Motor neuron (in vitro differentiated cells): ENCODE measurements at regions of chr12 and their contacts with region 1.

Region 1: DNA sequence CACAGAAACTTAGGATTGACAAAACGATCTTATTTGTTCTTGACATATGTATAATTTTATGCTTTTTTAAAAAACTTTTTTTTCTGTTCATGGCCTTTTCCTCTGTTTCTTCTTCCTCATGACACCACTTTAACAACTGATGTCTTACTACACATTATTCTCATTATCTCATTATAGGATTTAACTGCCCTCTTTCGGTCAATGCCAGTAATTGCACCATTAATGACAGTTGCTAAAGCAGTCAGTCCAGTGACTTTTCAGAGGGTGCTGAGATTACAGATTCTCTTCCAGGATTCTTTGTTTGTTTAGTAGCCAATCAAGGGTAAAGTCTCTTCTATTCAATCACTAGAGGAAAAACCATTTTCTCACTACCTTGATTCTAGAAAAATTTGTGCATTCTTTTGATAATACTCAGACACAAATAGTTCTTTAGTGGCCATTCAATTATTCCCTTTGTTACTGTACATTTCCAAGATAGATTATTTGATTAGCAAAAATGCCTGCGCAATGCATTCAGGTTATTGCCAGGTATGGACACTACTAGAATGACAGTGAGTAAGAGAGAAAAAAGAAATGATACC is 50.1 kb downstream of the KLRG1 start:
- ATAC-seq: peak in 6 of 8 experiments; percentile 44 to 84 (median 74)
- H3K4me3 ChIP-seq: no peak overlapping the region
- H3K27ac ChIP-seq: no peak overlapping the region
- H3K4me1 ChIP-seq: no peaks in the 10 kb centered on the region

Region 2: GRCh38 chr12:8544295-8544694 is 495.2 kb before region 1 on chr12:
- in situ Hi-C with region 1: loop called in 1 of 9 experiments (anchors 25 kb)
- ATAC-seq: peak; percentile 51 to 82 (median 70)
- H3K4me3 ChIP-seq: no peak overlapping the region
- H3K27ac ChIP-seq: no peak overlapping the region
- H3K4me1 ChIP-seq: no peaks in the 10 kb centered on the region

Region 3: DNA sequence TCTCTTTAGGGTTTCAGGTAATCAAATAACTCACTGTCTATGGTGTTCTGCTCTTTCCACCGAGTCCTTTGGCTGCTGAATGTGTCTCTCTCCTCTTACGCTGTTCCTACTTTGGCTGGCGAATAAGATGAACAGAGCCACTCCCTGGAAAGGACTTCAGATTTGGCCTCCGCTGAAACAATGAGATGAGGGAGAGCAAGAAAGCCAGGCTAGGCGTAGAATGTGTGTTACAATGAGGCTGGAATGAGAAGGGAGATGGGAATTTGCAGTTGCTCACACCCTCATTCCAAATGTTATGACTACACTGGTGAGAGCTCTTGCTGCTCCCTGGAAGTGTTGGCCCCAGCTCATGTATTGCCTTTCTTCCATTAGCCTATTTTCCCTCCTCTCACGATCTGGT is 376.9 kb before region 1 on chr12 and contains the start of gene MFAP5:
- in situ Hi-C with region 1: loop called in 3 of 9 experiments (anchors 10 to 25 kb)
- ATAC-seq: peak in 2 of 8 experiments; percentile 71 to 83
- H3K4me3 ChIP-seq: no peak within 1 kb of the TSS
- H3K27ac ChIP-seq: no peak within 1 kb of the TSS
- H3K4me1 ChIP-seq: no peaks in the 10 kb centered on the region
- total RNA-seq, gene MFAP5: 0.66 to 1.9 (median 0.81) TPM in 5 of 8 experiments, not detected in the others

Region 4: GRCh38 chr12:8697476-8698131 is 341.9 kb before region 1 on chr12 and contains the start of gene RIMKLB:
- in situ Hi-C with region 1: loop called in 2 of 9 experiments (anchors 25 kb)
- ATAC-seq: peak; percentile 76 to 86 (median 84)
- H3K4me3 ChIP-seq: peak within 1 kb of the TSS; percentile 52 to 98 (median 87)
- H3K27ac ChIP-seq: peak within 1 kb of the TSS; percentile 86 to 88
- H3K4me1 ChIP-seq: peaks cover 17 to 29% of the 10 kb centered on the region in 2 donors
- total RNA-seq, gene RIMKLB: 19.3 to 109 (median 71.1) TPM

Region 5: DNA sequence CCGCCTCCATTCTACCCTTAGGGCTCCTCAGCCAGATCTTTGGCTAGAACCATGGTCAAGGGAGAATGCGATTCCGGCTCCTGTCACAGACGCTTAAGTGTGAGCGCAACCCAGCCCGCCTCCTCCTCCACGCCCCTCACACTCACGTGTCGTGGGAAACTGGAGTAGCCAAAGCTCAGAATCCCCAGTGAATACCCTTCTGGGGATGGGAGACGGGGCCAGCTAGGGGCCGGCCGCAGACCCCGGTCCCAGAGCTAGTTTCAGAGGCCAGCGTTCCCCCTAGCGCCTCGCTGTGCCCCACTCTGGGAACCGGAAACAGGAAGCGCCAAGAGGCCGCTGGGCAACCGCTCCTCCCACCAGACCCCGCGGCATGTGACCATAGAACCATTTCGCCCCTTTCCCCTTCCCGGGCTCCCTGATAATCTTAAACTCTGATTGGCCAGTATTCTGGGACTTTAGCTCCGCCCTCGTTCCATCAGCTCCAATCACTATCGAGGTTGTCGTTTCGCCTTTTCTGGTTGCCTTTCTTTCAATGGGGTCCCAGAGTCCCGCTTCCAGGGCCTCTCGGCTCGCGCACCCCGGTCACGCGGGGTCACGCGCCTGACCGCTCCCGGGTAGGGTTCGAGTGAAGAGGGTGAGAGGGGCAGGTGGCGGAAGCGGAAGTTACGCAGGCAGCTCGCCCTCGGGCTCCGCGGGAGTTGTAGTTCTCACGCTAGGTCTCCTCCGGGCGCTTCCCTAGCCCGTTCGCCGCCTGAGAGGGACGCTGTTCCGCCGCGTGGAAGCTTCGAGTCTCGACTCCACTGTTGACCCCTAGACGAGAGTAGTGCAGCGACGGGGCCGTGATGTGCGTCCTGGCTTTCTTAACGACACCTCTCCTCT is 89.9 kb before region 1 on chr12 and contains the start of gene M6PR:
- in situ Hi-C with region 1: loop called in 1 of 9 experiments (anchors 10 kb)
- ATAC-seq: peak; percentile 86 to 94 (median 92)
- H3K4me3 ChIP-seq: peak within 1 kb of the TSS; percentile 71 to 98 (median 90)
- H3K27ac ChIP-seq: peak within 1 kb of the TSS; percentile 98 to 99
- H3K4me1 ChIP-seq: peaks cover 4 to 14% of the 10 kb centered on the region in 2 donors
- total RNA-seq, gene M6PR: 52.7 to 169 (median 85.4) TPM